Activated CD4-positive, alpha-beta memory T cell treated with anti-CD3 and anti-CD28 coated beads for 36 hours (primary cell): ENCODE measurements at regions of chr13 and their contacts with region 1.

Region 1: DNA sequence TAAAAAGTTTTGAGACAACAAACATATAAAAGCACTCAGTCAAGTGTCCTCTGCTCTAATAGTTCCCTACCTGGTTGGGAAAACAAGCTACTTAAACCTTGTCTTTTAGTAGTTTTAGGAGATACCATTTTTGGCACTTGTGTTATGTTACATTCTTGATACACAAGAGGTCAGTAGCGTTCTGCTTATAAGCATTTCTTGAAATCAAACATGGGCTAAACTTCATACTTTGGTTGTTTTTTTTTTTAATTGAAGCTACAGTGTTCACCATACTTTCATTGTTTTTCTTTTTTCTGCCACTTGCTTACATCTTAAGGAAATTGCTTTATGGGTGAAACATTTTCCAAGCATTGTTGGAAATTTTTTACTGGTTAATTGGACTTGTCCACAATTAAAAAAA is 12.9 kb downstream of the NHLRC3 start:
- DNase-seq: no peak
- H3K4me3 Mint-ChIP-seq: no peak overlapping the region
- H3K27ac Mint-ChIP-seq: no peak overlapping the region
- H3K4me1 Mint-ChIP-seq: peaks cover 3% of the 10 kb centered on the region
- H3K27me3 Mint-ChIP-seq: no peaks in the 10 kb centered on the region

Region 2: GRCh38 chr13:39105110-39105509 is 54.0 kb after region 1 on chr13:
- CTCF ChIA-PET with region 1: no interaction called
- POLR2A ChIA-PET with region 1: no interaction called
- intact Hi-C with region 1: no loop called
- DNase-seq: no peak
- H3K4me3 Mint-ChIP-seq: no peak overlapping the region
- H3K27ac Mint-ChIP-seq: no peak overlapping the region
- H3K4me1 Mint-ChIP-seq: no peaks in the 10 kb centered on the region
- H3K27me3 Mint-ChIP-seq: peaks cover 9% of the 10 kb centered on the region

Region 3: GRCh38 chr13:39263033-39263432 is 211.9 kb after region 1 on chr13:
- CTCF ChIA-PET with region 1: interaction called, 13 read pairs
- POLR2A ChIA-PET with region 1: no interaction called
- intact Hi-C with region 1: loop called (anchors 1 kb)
- DNase-seq: peak; percentile 63
- H3K4me3 Mint-ChIP-seq: no peak overlapping the region
- H3K27ac Mint-ChIP-seq: no peak overlapping the region
- H3K4me1 Mint-ChIP-seq: peaks cover 19% of the 10 kb centered on the region
- H3K27me3 Mint-ChIP-seq: no peaks in the 10 kb centered on the region

Region 4: DNA sequence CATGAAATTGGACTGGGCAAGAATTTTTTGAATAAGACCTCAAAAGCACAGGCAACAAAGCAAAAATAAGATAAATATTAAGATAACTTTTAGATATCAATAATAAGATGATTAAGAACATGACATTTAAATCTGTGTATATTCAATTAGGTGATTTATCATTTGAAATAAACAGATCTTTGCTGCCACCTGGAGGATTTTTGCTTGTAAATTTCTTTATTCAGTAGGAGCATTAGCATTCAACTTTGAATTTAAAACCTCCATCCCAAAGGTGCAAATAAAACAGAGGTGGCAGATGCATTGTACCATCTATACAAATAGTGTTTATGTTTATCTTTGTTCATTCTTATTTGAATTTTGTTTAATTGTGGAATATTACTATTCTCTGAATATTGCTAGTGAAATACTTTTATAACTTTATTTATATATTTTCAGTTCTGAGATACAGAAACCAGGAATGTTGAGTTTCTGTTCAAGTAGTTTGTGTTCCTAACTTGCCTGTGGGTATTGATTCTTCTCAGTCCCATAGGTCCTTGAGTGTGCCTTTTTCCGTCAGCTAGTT is 625.2 kb after region 1 on chr13:
- CTCF ChIA-PET with region 1: interaction called, 5 read pairs
- POLR2A ChIA-PET with region 1: no interaction called
- intact Hi-C with region 1: loop called (anchors 5 kb)
- DNase-seq: no peak
- H3K4me3 Mint-ChIP-seq: no peak overlapping the region
- H3K27ac Mint-ChIP-seq: no peak overlapping the region
- H3K4me1 Mint-ChIP-seq: no peaks in the 10 kb centered on the region
- H3K27me3 Mint-ChIP-seq: no peaks in the 10 kb centered on the region

Region 5: GRCh38 chr13:39748961-39749360 is 697.8 kb after region 1 on chr13:
- CTCF ChIA-PET with region 1: no interaction called
- POLR2A ChIA-PET with region 1: no interaction called
- intact Hi-C with region 1: no loop called
- DNase-seq: no peak
- H3K4me3 Mint-ChIP-seq: no peak overlapping the region
- H3K27ac Mint-ChIP-seq: no peak overlapping the region
- H3K4me1 Mint-ChIP-seq: no peaks in the 10 kb centered on the region
- H3K27me3 Mint-ChIP-seq: no peaks in the 10 kb centered on the region